HepG2 (cell line): ENCODE measurements at regions of chr10 and their contacts with region 1.

Region 1: GRCh38 chr10:72048450-72049124 is 39.8 kb downstream of the SPOCK2 start:
- DNase-seq: peak; percentile 89
- ATAC-seq: peak; percentile 67
- H3K4me3 ChIP-seq: no peak overlapping the region
- H3K27ac ChIP-seq: no peak overlapping the region
- H3K4me1 ChIP-seq: peaks cover 72% of the 10 kb centered on the region
- H3K27me3 ChIP-seq: no peaks in the 10 kb centered on the region
- CTCF ChIP-seq: peak; percentile 99
- EP300 ChIP-seq: 0 out of 4 replicates have a peak, but pooled peaks of 1 of the 2 experiments have one; percentile 20
- POLR2A ChIP-seq: no peak
- RAD21 ChIP-seq: peak; percentile 98

Region 2: GRCh38 chr10:71805776-71806703 is 242.5 kb before region 1 on chr10:
- CTCF ChIA-PET with region 1: no interaction called
- POLR2A ChIA-PET with region 1: no interaction called
- in situ Hi-C with region 1: no loop called
- intact Hi-C with region 1: no loop called
- DNase-seq: no peak
- ATAC-seq: peak; percentile 70
- H3K4me3 ChIP-seq: peak overlapping the region in 1 of 3 experiments; percentile 12; a peak in 1 of 6 replicates
- H3K27ac ChIP-seq: no peak overlapping the region
- H3K4me1 ChIP-seq: peaks cover 9% of the 10 kb centered on the region; the same call in 1 of the 2 replicates
- H3K27me3 ChIP-seq: peaks cover 5 to 19% of the 10 kb centered on the region in 2 experiments; a peak in 4 of 5 replicates
- CTCF ChIP-seq: no peak
- EP300 ChIP-seq: no peak
- POLR2A ChIP-seq: no peak
- RAD21 ChIP-seq: no peak

Region 3: GRCh38 chr10:71835671-71836595 is 212.7 kb before region 1 on chr10:
- CTCF ChIA-PET with region 1: no interaction called
- POLR2A ChIA-PET with region 1: no interaction called
- in situ Hi-C with region 1: no loop called
- intact Hi-C with region 1: loop called (anchors 10 kb)
- DNase-seq: peak; percentile 42
- ATAC-seq: peak; percentile 49
- H3K4me3 ChIP-seq: no peak overlapping the region
- H3K27ac ChIP-seq: peak overlapping the region; percentile 34
- H3K4me1 ChIP-seq: peaks cover 36% of the 10 kb centered on the region
- H3K27me3 ChIP-seq: no peaks in the 10 kb centered on the region
- CTCF ChIP-seq: no peak
- EP300 ChIP-seq: no peak
- POLR2A ChIP-seq: no peak
- RAD21 ChIP-seq: no peak

Region 4: DNA sequence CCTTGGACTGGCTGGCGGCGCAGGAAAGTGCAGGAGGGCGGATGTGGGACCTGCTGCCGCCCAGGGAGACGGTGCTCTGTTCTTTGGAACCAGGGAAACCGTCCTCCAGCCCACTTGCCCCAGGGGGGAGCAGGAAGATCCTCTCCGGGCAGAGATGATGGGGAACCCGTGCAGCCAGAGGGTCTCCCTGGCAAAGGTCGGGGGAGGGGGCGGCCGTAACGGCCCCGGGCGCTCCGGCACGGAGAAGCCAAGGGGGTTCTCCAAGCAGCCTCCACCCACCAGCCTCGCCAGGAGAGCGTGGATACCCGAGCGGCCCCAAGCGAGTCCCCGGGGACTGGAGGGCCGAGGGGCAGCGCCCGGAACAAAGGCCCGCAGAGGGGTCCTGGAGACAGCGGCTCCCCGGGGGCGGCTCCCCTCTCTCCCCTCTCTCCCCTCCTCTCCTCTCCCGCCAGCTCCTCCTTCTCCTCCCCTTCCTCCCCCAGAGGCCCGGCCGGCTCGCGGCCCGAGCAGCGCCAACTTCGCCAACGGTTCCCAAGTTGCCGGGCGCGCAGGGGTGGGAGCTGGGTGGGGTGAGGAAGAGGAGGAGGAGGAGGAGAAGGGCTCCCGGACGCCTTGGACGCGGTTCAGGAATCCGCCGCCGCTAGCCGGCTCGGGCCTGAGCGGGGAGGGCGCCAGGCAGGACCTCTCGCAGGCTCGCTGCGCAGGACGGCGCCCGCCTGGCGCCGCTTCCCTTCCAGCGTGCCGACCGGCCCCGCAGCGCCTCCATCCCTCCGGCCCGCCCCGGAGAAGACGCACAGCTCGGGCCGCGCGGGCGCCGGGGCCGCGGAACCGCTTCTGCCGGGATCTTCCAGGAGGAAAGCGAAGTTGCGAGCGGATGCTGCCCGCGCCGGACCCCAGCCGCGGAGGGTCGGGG is 84.6 kb before region 1 on chr10 and contains the start of gene CHST3:
- CTCF ChIA-PET with region 1: interaction called, 4 read pairs
- POLR2A ChIA-PET with region 1: interaction called, 11 read pairs
- in situ Hi-C with region 1: loop called (anchors 5 kb)
- intact Hi-C with region 1: no loop called
- DNase-seq: no peak
- ATAC-seq: peak; percentile 81
- H3K4me3 ChIP-seq: peak within 1 kb of the TSS; percentile 78 to 95 (median 89)
- H3K27ac ChIP-seq: peak within 1 kb of the TSS; percentile 86
- H3K4me1 ChIP-seq: peaks cover 52% of the 10 kb centered on the region
- H3K27me3 ChIP-seq: peaks cover 0 to 4% of the 10 kb centered on the region in 2 experiments; a peak in 1 of 5 replicates
- CTCF ChIP-seq: no peak
- EP300 ChIP-seq: no peak
- POLR2A ChIP-seq: peak; percentile 7 to 15; a peak in 1 of 4 replicates
- RAD21 ChIP-seq: no peak
- total RNA-seq, gene CHST3: 13.4 and 18.7 TPM in 2 replicates

Region 5: GRCh38 chr10:71985542-71986250 is 62.9 kb before region 1 on chr10:
- CTCF ChIA-PET with region 1: interaction called, 3 read pairs
- POLR2A ChIA-PET with region 1: interaction called, 12 read pairs
- in situ Hi-C with region 1: no loop called
- intact Hi-C with region 1: loop called (anchors 1 kb)
- DNase-seq: no peak
- ATAC-seq: no peak
- H3K4me3 ChIP-seq: peak overlapping the region in 1 of 3 experiments; percentile 41; a peak in 1 of 6 replicates
- H3K27ac ChIP-seq: peak overlapping the region; percentile 88
- H3K4me1 ChIP-seq: peaks cover 86% of the 10 kb centered on the region
- H3K27me3 ChIP-seq: no peaks in the 10 kb centered on the region
- CTCF ChIP-seq: no peak
- EP300 ChIP-seq: no peak
- POLR2A ChIP-seq: no peak
- RAD21 ChIP-seq: no peak

Region 6: DNA sequence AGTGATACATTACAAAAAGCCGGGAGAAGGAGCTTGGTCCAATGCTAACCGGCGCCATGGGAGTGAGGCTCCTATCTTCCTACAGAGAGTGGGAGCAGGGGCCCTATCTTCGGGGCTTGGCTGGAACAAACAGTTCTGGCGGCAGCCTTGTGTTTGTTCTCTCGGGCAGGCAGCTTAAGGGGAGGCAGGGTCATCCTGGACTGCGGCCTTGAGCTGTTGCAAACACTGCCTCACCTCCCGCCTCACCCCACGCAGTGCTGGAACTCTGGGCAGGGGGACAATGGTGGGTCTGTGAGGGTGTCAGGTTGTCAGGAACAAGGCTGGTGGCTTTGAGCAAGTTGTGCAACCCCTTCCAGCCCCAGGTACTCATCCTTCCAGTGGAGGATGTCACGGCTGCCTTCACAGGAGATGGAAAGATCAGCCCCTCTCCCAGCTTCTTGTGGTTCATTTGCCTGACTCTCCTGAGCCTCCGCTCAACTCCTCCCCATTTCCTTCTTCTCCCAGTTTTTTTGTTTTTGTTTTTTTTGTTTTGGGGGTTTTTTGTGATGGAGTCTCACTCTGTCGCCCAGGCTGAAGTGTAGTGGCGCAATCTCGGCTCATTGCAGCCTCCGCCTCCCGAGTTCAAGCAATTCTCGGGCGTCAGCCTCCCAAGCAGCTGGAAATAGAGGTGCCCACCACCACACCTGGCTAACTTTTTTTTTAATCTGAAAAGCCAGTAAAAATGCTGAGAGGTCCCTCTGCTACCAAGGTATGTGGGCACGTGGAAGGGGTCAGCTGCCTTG is 17.6 kb before region 1 on chr10:
- CTCF ChIA-PET with region 1: interaction called, 3 read pairs
- POLR2A ChIA-PET with region 1: interaction called, 67 read pairs
- in situ Hi-C with region 1: no loop called
- intact Hi-C with region 1: no loop called
- DNase-seq: peak; percentile 97
- ATAC-seq: peak; percentile 89
- H3K4me3 ChIP-seq: peak overlapping the region; percentile 45 to 66 (median 58); a peak in 5 of 6 replicates
- H3K27ac ChIP-seq: peak overlapping the region; percentile 99
- H3K4me1 ChIP-seq: peaks cover 99% of the 10 kb centered on the region
- H3K27me3 ChIP-seq: no peaks in the 10 kb centered on the region
- CTCF ChIP-seq: peak; percentile 29; the same call in 1 of the 2 replicates
- EP300 ChIP-seq: peak; percentile 97 to 99
- POLR2A ChIP-seq: peak; percentile 65 to 82
- RAD21 ChIP-seq: peak; percentile 49; the same call in 1 of the 2 replicates

Region 7: GRCh38 chr10:72297968-72298773 is 249.6 kb after region 1 on chr10:
- CTCF ChIA-PET with region 1: no interaction called
- POLR2A ChIA-PET with region 1: no interaction called
- in situ Hi-C with region 1: no loop called
- intact Hi-C with region 1: no loop called
- DNase-seq: no peak
- ATAC-seq: no peak
- H3K4me3 ChIP-seq: no peak overlapping the region
- H3K27ac ChIP-seq: no peak overlapping the region
- H3K4me1 ChIP-seq: peaks cover 40% of the 10 kb centered on the region
- H3K27me3 ChIP-seq: no peaks in the 10 kb centered on the region
- CTCF ChIP-seq: no peak
- EP300 ChIP-seq: no peak
- POLR2A ChIP-seq: no peak
- RAD21 ChIP-seq: no peak

Region 8: DNA sequence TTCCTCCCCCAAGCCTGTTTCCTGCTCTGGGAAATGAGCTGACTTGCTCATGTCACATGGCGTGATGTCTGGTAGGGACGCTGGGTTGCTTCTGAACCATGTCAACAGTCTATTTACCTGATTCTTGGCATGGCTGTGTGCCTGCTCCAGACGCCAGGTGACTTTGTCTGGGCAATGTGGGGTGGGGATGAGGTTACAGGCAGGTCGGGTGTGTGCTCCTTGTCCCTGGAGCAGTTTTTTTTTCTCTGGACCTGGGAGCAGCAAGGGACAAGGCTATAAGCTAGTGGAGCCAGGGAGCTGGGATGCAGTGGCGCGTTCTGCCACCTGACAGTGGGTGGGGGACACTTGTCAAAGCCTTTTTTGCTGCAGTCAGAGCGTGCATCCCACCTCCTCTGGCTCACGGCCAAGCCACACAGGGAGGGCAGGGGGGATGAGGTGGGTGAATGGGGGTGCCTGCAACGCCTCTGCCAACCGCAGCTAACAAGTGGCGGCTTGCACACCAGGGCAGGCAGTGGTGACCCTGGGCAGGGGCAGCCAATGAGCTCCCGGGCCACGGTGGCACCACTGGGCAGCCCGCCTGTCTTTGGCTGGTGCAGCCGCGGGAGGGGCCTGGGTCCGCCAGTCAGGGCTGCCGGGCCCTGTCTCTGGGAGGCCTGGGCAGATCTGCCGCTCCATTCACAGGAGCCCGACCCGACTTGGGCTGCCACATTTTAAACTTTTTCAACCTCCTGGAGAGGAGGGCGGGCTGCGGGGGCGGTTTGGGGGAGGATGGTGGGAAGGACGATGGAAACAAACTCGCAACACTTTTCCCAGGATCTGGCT is 283.2 kb after region 1 on chr10:
- CTCF ChIA-PET with region 1: interaction called, 5 read pairs
- POLR2A ChIA-PET with region 1: no interaction called
- in situ Hi-C with region 1: no loop called
- intact Hi-C with region 1: loop called (anchors 5 kb)
- DNase-seq: peak; percentile 91
- ATAC-seq: peak; percentile 82
- H3K4me3 ChIP-seq: peak overlapping the region; percentile 13 to 65 (median 22); a peak in 4 of 6 replicates
- H3K27ac ChIP-seq: peak overlapping the region; percentile 91
- H3K4me1 ChIP-seq: peaks cover 95% of the 10 kb centered on the region
- H3K27me3 ChIP-seq: no peaks in the 10 kb centered on the region
- CTCF ChIP-seq: peak; percentile 54
- EP300 ChIP-seq: peak in 1 of 2 experiments; percentile 44; a peak in 1 of 4 replicates
- POLR2A ChIP-seq: no peak
- RAD21 ChIP-seq: no peak